Ovary (tissue), 10 donors: ENCODE measurements at regions of chr4 and their contacts with region 1.

Region 1: DNA sequence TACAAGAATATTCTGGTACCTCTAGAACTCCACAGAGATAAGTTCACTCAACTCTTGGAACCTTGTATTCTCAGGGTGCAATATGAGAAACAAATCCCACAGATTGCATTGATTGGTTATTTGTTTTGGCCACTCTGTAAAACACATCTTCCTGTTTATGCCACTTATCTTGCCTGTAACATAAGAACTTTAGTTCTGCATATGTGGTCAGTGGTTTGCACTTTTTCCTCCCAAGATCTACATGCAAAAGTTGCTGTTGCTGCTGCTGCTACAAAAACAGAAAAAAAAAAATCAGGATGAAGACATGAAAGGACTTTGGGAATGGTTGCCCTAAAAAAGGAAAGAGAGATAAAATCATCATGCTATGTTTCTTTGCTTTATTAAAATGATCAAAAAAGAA is 9.6 kb downstream of the ODAPH start:
- DNase-seq: no peak
- H3K4me3 ChIP-seq: no peak overlapping the region
- H3K27ac ChIP-seq: no peak overlapping the region
- H3K4me1 ChIP-seq: no peaks in the 10 kb centered on the region
- H3K27me3 ChIP-seq: no peaks in the 10 kb centered on the region
- CTCF ChIP-seq: no peak
- EP300 ChIP-seq: no peak
- POLR2A ChIP-seq: no peak

Region 2: GRCh38 chr4:75056277-75056676 is 509.2 kb before region 1 on chr4:
- intact Hi-C with region 1: no loop called
- DNase-seq: no peak
- H3K4me3 ChIP-seq: no peak overlapping the region
- H3K27ac ChIP-seq: no peak overlapping the region
- H3K4me1 ChIP-seq: no peaks in the 10 kb centered on the region
- H3K27me3 ChIP-seq: no peaks in the 10 kb centered on the region
- CTCF ChIP-seq: no peak
- EP300 ChIP-seq: no peak
- POLR2A ChIP-seq: no peak

Region 3: DNA sequence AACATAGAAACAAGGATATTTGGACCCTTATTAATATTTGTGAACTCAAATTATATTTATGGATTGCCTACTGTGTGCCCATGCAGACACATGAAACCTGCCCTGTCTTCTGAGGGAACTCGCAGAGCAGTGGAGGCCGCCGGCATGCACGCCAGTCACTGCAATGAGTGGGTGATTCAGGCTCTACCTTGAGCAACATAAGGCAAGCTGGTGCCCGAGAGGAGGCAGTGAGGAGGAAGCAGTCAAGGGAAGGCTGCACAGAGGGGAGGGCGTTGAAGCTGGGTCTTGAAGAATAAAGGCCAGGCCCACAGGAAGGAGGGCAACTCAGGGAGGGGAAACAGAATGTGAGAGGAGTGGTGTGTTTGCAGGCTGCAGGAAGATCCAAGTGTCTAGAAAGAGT is 284.0 kb after region 1 on chr4:
- intact Hi-C with region 1: loop called in 1 of 4 experiments (anchors 2 kb)
- DNase-seq: no peak
- H3K4me3 ChIP-seq: no peak overlapping the region
- H3K27ac ChIP-seq: no peak overlapping the region
- H3K4me1 ChIP-seq: peaks cover 4% of the 10 kb centered on the region
- H3K27me3 ChIP-seq: no peaks in the 10 kb centered on the region
- CTCF ChIP-seq: no peak
- EP300 ChIP-seq: no peak
- POLR2A ChIP-seq: no peak

Region 4: DNA sequence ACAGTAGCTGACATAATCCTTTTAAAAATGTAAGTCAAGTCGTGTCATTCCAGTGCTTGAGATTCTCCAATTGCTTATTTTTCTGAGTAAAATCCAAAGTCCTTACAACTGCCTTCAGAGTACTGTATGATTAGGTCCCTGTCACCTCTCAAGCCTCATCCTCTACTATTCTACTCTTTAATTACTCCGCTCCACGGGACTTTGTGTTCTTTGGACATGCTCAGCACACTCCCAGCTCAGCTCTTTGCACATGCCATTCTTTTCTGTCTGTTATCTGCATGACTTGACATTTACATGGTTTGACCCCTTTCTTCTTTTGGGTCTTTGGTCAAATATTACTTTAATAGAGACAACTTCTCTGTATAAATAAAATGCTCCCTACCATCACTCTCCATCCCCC is 701.1 kb after region 1 on chr4:
- intact Hi-C with region 1: no loop called
- DNase-seq: no peak
- H3K4me3 ChIP-seq: no peak overlapping the region
- H3K27ac ChIP-seq: no peak overlapping the region
- H3K4me1 ChIP-seq: no peaks in the 10 kb centered on the region
- H3K27me3 ChIP-seq: no peaks in the 10 kb centered on the region
- CTCF ChIP-seq: no peak
- EP300 ChIP-seq: no peak
- POLR2A ChIP-seq: no peak